Endothelial cell of umbilical vein (primary cell): ENCODE measurements at regions of chr10 and their contacts with region 1.

Region 1: GRCh38 chr10:102225646-102226541 is at the start of gene ELOVL3:
- DNase-seq: peak; percentile 97
- H3K4me3 ChIP-seq: no peak within 1 kb of the TSS
- H3K27ac ChIP-seq: no peak within 1 kb of the TSS
- H3K4me1 ChIP-seq: peaks cover 12% of the 10 kb centered on the region
- H3K27me3 ChIP-seq: peaks cover 54 to 59% of the 10 kb centered on the region in 2 experiments
- CTCF ChIP-seq: no peak
- POLR2A ChIP-seq: no peak
- total RNA-seq, gene ELOVL3: not detected in 2 replicates

Region 2: DNA sequence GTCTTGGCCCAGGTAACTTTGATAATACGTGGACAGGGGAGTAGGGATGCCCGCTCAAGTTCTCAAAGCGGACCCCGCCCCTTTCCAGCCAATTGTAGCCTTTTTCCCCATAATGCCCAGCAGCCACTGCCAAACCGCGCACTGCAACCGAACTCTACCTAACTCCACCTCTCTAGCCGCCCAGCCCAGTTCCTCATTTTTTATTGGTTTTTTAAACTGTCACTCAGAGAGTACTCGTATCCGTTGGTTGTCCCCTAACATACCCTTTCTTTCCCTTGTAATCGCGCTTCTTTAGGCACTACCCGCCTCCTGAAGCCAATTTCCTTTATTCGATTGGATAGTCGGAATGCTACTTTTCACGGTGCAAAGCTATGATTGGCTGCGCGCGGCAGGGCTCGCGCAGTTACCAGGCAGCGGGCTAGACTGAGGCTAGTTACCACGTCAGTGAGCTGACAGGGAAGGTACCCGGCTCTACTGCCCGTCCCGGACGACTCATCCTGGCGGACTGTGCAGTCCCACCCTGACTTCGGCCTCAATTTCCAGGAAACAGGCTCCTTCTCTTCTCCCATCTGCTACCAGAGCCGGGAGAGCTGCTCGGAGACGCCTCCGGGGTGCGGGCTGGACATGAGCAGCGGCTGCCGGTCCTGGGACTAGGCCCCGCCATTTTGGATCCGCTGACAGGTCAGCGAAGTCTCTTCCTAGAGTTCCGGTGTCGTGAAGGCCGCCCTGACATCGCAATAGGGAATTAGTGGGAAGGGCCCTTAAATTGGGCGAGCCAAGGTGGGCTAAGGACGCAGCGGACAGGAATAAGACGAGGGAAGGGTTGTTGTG is 19.4 kb after region 1 on chr10 and contains the start of gene GBF1:
- CTCF ChIA-PET with region 1: interaction called, 47 read pairs
- POLR2A ChIA-PET with region 1: interaction called, 5 read pairs
- dilution Hi-C with region 1: no loop called
- intact Hi-C with region 1: no loop called
- DNase-seq: peak; percentile 100
- H3K4me3 ChIP-seq: peak within 1 kb of the TSS; percentile 59 to 90 (median 85)
- H3K27ac ChIP-seq: peak within 1 kb of the TSS; percentile 61
- H3K4me1 ChIP-seq: peaks cover 29% of the 10 kb centered on the region
- H3K27me3 ChIP-seq: peaks cover 8% of the 10 kb centered on the region in 2 experiments
- CTCF ChIP-seq: no peak
- POLR2A ChIP-seq: peak; percentile 83
- total RNA-seq, gene GBF1: 45.7 and 49.7 TPM in 2 replicates

Region 3: DNA sequence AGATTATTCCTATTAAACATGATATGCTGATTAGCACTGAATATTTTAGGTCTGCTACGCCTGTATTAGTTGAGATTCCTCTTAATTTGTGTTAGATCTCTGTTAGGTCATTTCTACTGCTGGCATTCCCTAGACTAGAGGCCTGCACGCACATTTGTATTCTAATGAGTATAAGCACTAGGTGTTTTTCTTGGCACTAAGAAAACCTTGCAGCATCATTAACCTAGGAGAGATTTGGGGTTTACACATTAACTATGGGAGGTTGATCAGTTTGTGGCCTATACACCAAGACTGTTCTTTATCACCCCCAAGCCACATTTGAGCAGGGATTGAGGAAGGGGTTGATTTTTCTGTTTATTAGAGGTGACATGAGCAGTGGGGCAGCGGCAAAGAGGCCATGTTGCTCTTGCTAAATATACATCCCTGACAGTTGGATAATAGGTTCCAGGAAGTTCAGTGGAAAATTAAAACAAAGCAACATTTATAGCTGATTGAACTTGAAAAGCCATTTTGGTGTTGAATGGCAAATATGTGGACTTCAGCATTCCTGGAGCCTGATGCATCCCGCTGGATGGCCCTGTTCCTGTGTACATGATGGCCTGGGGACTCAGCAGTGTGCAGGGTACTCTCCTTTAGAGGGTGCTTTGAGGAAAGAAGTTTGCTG is 84.6 kb after region 1 on chr10:
- CTCF ChIA-PET with region 1: interaction called, 48 read pairs
- POLR2A ChIA-PET with region 1: no interaction called
- dilution Hi-C with region 1: no loop called
- intact Hi-C with region 1: no loop called
- DNase-seq: peak; percentile 49
- H3K4me3 ChIP-seq: no peak overlapping the region
- H3K27ac ChIP-seq: peak overlapping the region; percentile 41
- H3K4me1 ChIP-seq: peaks cover 16% of the 10 kb centered on the region
- H3K27me3 ChIP-seq: no peaks in the 10 kb centered on the region
- CTCF ChIP-seq: no peak
- POLR2A ChIP-seq: no peak

Region 4: DNA sequence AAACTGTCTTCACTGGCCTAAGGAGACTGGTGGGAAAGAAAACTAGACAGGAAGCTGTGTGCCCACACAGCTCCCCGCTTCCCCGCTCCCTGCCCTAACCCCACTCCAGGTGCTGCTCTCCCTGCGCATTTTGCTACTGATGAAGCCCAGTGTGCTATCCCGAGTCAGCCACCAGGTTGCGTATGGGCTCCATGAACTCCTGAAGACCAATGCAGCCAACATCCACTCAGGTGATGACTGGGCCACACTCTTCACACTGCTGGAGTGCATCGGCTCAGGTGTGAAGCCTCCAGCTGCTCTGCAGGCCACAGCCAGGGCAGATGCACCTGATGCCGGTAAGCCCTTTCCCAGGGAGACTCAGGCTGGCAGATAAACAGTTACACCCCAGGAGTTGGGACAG is 149.4 kb after region 1 on chr10:
- CTCF ChIA-PET with region 1: interaction called, 24 read pairs
- POLR2A ChIA-PET with region 1: no interaction called
- dilution Hi-C with region 1: loop called (anchors 25 kb)
- intact Hi-C with region 1: no loop called
- DNase-seq: no peak
- H3K4me3 ChIP-seq: no peak overlapping the region
- H3K27ac ChIP-seq: no peak overlapping the region
- H3K4me1 ChIP-seq: no peaks in the 10 kb centered on the region
- H3K27me3 ChIP-seq: no peaks in the 10 kb centered on the region
- CTCF ChIP-seq: no peak
- POLR2A ChIP-seq: no peak

Region 5: GRCh38 chr10:102399217-102400089 is 173.6 kb after region 1 on chr10:
- CTCF ChIA-PET with region 1: interaction called, 168 read pairs
- POLR2A ChIA-PET with region 1: interaction called, 3 read pairs
- dilution Hi-C with region 1: no loop called
- intact Hi-C with region 1: loop called (anchors 1 kb)
- DNase-seq: peak; percentile 82
- H3K4me3 ChIP-seq: peak overlapping the region in 2 of 3 experiments; percentile 15 to 48
- H3K27ac ChIP-seq: no peak overlapping the region
- H3K4me1 ChIP-seq: peaks cover 13% of the 10 kb centered on the region
- H3K27me3 ChIP-seq: no peaks in the 10 kb centered on the region
- CTCF ChIP-seq: peak; percentile 93 to 96
- POLR2A ChIP-seq: no peak

Region 6: DNA sequence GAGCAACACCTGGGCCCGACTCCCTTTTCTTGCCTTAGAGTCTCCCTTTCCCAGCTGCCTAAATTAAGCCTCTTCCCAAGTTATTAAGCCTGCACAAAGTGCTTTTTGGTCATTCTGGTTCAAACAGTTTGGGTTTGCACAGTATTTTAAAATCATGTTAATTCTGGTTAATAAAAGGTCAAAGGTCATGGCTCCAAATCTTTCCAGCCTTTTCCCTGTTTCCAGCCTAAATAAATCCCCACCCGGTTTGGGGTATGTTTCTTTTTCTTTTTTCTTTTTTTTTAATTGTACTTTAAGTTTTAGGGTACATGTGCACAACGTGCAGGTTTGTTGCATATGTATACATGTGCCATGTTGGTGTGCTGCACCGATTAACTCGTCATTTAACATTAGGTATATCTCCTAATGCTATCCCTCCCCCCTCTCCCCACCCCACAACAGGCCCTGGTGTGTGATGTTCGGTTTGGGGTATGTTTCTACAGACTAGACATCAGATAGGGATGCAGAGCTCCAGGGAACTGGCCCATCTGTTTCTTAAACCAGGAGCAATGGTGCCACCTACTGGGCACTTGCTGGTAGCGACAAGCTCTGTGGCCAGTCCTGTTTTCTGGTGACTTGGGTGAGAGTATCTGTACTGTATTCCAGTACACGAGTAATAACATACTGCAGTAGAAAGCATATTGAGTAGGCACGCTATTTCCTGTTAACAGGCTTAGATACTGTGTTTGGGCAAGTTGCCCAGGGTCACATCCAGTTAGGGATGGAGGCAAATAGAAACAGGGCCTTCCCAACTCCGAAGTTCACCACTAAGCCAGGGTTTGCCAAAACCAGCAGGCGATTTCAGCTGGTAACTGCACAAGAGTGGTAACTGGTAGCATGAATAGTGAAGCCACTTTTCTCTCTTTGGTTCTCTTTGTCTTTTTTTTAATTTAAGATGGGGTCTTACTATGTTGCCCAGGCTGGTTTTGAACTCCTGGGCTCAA is 357.8 kb after region 1 on chr10:
- CTCF ChIA-PET with region 1: interaction called, 7 read pairs
- POLR2A ChIA-PET with region 1: no interaction called
- dilution Hi-C with region 1: no loop called
- intact Hi-C with region 1: loop called (anchors 5 kb)
- DNase-seq: peak; percentile 86
- H3K4me3 ChIP-seq: no peak overlapping the region
- H3K27ac ChIP-seq: no peak overlapping the region
- H3K4me1 ChIP-seq: peaks cover 16% of the 10 kb centered on the region
- H3K27me3 ChIP-seq: no peaks in the 10 kb centered on the region
- CTCF ChIP-seq: peak; percentile 78 to 79
- POLR2A ChIP-seq: no peak